Activated CD4-positive, alpha-beta T cell treated with anti-CD3 and anti-CD28 coated beads, Interleukin-2, amount 10 ng/mL, durations not matched to agents 7 days and 5 days (primary cell): ENCODE measurements at regions of chr10 and their contacts with region 1.

Region 1: GRCh38 chr10:75235375-75236177 is at the start of gene COMTD1:
- DNase-seq: peak; percentile 95
- H3K4me3 Mint-ChIP-seq: peak within 1 kb of the TSS; percentile 78
- H3K27ac Mint-ChIP-seq: peak within 1 kb of the TSS; percentile 90
- H3K4me1 Mint-ChIP-seq: peaks cover 33% of the 10 kb centered on the region
- H3K27me3 Mint-ChIP-seq: no peaks in the 10 kb centered on the region
- total RNA-seq, gene COMTD1: 27.3 to 44.7 TPM

Region 2: GRCh38 chr10:75179657-75180177 is 55.9 kb before region 1 on chr10:
- CTCF ChIA-PET with region 1: interaction called, 15 read pairs
- POLR2A ChIA-PET with region 1: no interaction called
- DNase-seq: no peak
- H3K4me3 Mint-ChIP-seq: no peak overlapping the region
- H3K27ac Mint-ChIP-seq: peak overlapping the region; percentile 31
- H3K4me1 Mint-ChIP-seq: peaks cover 24% of the 10 kb centered on the region
- H3K27me3 Mint-ChIP-seq: no peaks in the 10 kb centered on the region

Region 3: DNA sequence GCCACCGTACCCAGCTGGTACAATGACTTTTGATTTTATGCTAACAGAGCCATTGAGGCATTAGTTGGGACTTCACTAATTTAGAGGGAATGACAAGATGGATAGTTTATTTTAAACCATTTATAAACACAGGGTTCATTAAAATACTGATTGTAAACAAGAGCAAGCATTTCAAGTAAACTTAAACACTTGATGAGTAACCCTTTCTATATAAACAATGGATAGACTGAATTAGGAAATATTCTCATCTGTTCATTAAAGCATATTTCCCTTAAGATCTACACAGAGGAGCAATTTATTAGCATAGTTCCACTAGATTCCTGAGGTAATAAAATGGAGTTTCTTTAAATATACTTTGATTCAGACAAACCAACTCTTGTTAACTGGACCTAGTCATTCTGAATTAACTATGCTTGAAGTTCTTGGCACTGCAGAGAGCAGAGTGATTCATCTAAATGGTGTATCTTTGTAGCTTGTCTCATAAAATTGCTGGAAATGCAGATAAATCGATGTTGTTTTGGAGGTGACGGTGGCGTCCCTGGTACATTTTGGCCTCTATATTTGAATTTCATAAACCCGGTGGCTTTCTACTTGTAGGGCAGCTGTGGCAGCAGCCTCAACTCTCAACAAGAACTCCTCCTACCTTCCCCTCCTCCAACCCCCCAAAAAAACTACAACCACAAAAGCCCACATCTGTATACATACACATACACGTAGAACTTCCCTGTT is 40.4 kb before region 1 on chr10:
- CTCF ChIA-PET with region 1: interaction called, 14 read pairs
- POLR2A ChIA-PET with region 1: no interaction called
- DNase-seq: no peak
- H3K4me3 Mint-ChIP-seq: no peak overlapping the region
- H3K27ac Mint-ChIP-seq: no peak overlapping the region
- H3K4me1 Mint-ChIP-seq: peaks cover 2% of the 10 kb centered on the region
- H3K27me3 Mint-ChIP-seq: no peaks in the 10 kb centered on the region

Region 4: GRCh38 chr10:75210282-75211006 is 25.1 kb before region 1 on chr10 and contains the start of gene VDAC2:
- CTCF ChIA-PET with region 1: interaction called, 55 read pairs
- POLR2A ChIA-PET with region 1: interaction called, 5 read pairs
- DNase-seq: peak; percentile 94
- H3K4me3 Mint-ChIP-seq: peak within 1 kb of the TSS; percentile 97
- H3K27ac Mint-ChIP-seq: peak within 1 kb of the TSS; percentile 100
- H3K4me1 Mint-ChIP-seq: peaks cover 45% of the 10 kb centered on the region
- H3K27me3 Mint-ChIP-seq: no peaks in the 10 kb centered on the region
- total RNA-seq, gene VDAC2: 98.6 to 122 TPM

Region 5: GRCh38 chr10:75250910-75251309 is 15.3 kb after region 1 on chr10:
- CTCF ChIA-PET with region 1: interaction called, 28 read pairs
- POLR2A ChIA-PET with region 1: no interaction called
- DNase-seq: no peak
- H3K4me3 Mint-ChIP-seq: no peak overlapping the region
- H3K27ac Mint-ChIP-seq: no peak overlapping the region
- H3K4me1 Mint-ChIP-seq: no peaks in the 10 kb centered on the region
- H3K27me3 Mint-ChIP-seq: no peaks in the 10 kb centered on the region